B cell (primary cell): ENCODE measurements at regions of chr12 and their contacts with region 1.

Region 1: GRCh38 chr12:106223485-106224354 is 24.1 kb downstream of the CKAP4 start:
- DNase-seq: peak; percentile 79
- ATAC-seq: peak; percentile 73
- H3K4me3 ChIP-seq: no peak overlapping the region
- H3K4me3 Mint-ChIP-seq: no peak overlapping the region
- H3K27ac ChIP-seq: no peak overlapping the region
- H3K27ac Mint-ChIP-seq: no peak overlapping the region
- H3K4me1 ChIP-seq: peaks cover 12 to 16% of the 10 kb centered on the region in 2 donors
- H3K4me1 Mint-ChIP-seq: peaks cover 24% of the 10 kb centered on the region
- H3K27me3 ChIP-seq: peaks cover 0 to 17% (median 12%) of the 10 kb centered on the region in 4 experiments
- H3K27me3 Mint-ChIP-seq: peaks cover 16% of the 10 kb centered on the region
- CTCF ChIP-seq: peak; percentile 86

Region 2: DNA sequence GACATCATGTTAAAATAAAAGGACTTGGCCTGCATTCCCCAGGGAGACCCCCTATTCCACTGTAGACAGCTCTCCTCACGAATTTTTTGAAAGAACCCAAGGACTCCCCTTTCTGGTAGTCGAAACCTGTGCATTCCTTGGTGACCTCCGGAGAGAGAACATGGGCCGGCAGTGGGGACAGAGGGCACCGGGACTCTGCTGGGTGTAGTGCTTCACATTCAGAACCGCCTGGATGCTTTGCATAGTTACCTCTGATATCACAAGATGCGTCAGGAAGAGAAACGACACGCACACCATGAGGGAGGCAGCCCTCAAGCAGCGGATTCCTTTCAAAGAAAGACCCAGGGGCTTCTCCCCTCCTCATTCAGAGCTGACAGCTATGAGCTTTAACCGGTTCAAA is 14.4 kb after region 1 on chr12:
- CTCF ChIA-PET with region 1: interaction called, 11 read pairs
- POLR2A ChIA-PET with region 1: no interaction called
- intact Hi-C with region 1: no loop called
- DNase-seq: no peak
- ATAC-seq: no peak
- H3K4me3 ChIP-seq: no peak overlapping the region
- H3K4me3 Mint-ChIP-seq: no peak overlapping the region
- H3K27ac ChIP-seq: no peak overlapping the region
- H3K27ac Mint-ChIP-seq: no peak overlapping the region
- H3K4me1 ChIP-seq: no peaks in the 10 kb centered on the region
- H3K4me1 Mint-ChIP-seq: peaks cover 4% of the 10 kb centered on the region
- H3K27me3 ChIP-seq: peaks cover 0 to 15% (median 3%) of the 10 kb centered on the region in 4 experiments
- H3K27me3 Mint-ChIP-seq: no peaks in the 10 kb centered on the region
- CTCF ChIP-seq: no peak

Region 3: GRCh38 chr12:106282457-106283097 is 58.9 kb after region 1 on chr12:
- CTCF ChIA-PET with region 1: interaction called, 393 read pairs
- POLR2A ChIA-PET with region 1: interaction called, 7 read pairs
- intact Hi-C with region 1: loop called (anchors 1 kb)
- DNase-seq: peak; percentile 75
- ATAC-seq: peak; percentile 82
- H3K4me3 ChIP-seq: no peak overlapping the region
- H3K4me3 Mint-ChIP-seq: no peak overlapping the region
- H3K27ac ChIP-seq: no peak overlapping the region
- H3K27ac Mint-ChIP-seq: peak overlapping the region; percentile 2
- H3K4me1 ChIP-seq: peaks cover 7 to 8% of the 10 kb centered on the region in 2 donors
- H3K4me1 Mint-ChIP-seq: peaks cover 37% of the 10 kb centered on the region
- H3K27me3 ChIP-seq: peaks cover 0 to 11% (median 0%) of the 10 kb centered on the region in 4 experiments
- H3K27me3 Mint-ChIP-seq: peaks cover 20% of the 10 kb centered on the region
- CTCF ChIP-seq: peak; percentile 88

Region 4: DNA sequence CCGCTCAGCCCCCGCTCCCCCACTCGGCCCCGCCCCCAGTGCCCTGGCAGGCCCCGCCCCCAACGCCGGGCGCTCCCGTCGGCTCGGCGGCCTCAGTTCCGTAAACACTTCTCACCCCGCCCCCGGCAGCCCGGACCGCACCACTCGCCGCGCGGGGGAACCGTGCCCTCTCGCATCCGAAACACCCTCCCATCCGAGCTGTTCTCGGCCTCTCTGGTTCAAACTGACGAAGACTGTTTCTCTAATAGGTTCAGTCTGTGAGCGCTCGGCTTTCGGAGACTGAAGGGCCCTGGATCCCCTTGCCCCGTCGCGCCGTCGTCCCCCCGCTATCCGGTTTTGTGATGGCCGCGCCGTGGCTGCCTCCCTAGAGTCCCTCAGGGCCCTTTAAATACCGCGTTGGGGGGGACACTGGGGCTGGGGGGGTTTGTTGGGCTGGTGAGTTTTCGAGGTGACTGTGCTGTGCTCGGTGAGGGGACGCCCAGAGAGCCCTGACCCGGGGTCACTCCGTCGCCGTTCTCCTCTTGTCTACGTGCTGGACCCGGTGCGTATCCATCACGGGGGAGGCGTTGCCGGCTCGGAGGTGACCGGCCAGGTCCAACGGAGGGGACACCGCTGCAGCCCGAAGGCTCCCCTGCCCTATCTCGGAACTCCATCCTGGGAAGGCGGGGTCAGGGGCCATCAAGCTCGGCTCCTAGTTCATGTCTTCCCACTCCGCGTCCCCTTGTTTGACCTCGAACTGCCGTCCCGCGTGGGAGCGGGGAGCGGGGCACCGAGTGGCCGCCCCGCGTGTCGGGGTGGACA is 78.9 kb after region 1 on chr12 and contains the start of gene TCP11L2:
- CTCF ChIA-PET with region 1: interaction called, 85 read pairs
- POLR2A ChIA-PET with region 1: interaction called, 26 read pairs
- intact Hi-C with region 1: loop called (anchors 1 kb)
- DNase-seq: peak; percentile 96
- ATAC-seq: peak; percentile 58
- H3K4me3 ChIP-seq: peak within 1 kb of the TSS; percentile 84 to 100 (median 99)
- H3K4me3 Mint-ChIP-seq: peak within 1 kb of the TSS; percentile 94
- H3K27ac ChIP-seq: peak within 1 kb of the TSS; percentile 98 to 99
- H3K27ac Mint-ChIP-seq: peak within 1 kb of the TSS; percentile 100
- H3K4me1 ChIP-seq: peaks cover 43 to 48% of the 10 kb centered on the region in 2 donors
- H3K4me1 Mint-ChIP-seq: peaks cover 65% of the 10 kb centered on the region
- H3K27me3 ChIP-seq: no peaks in the 10 kb centered on the region
- H3K27me3 Mint-ChIP-seq: no peaks in the 10 kb centered on the region
- CTCF ChIP-seq: no peak
- total RNA-seq, gene TCP11L2: 306 and 315 TPM in 2 replicates

Region 5: DNA sequence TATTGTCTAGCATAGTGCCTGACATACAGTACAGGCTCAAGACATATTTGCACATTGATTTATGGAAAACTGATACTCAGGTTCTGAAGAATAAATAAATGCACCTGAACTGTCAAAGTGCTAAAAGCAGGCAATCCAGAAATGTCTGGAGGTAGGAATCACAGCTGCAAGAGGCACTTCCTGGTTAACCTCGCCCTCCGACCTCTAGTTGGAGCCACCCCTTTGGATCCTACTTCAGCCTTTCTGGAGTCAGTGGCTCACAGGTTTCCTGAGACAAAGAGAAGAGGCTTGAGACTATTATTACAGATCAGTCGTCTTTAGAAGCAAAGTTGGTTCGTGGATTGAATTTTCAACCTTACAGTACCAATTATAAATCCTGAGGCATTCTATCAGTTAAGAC is 91.8 kb after region 1 on chr12:
- CTCF ChIA-PET with region 1: interaction called, 23 read pairs
- POLR2A ChIA-PET with region 1: interaction called, 5 read pairs
- intact Hi-C with region 1: no loop called
- DNase-seq: no peak
- ATAC-seq: no peak
- H3K4me3 ChIP-seq: no peak overlapping the region
- H3K4me3 Mint-ChIP-seq: no peak overlapping the region
- H3K27ac ChIP-seq: no peak overlapping the region
- H3K27ac Mint-ChIP-seq: peak overlapping the region; percentile 59
- H3K4me1 ChIP-seq: peaks cover 7 to 9% of the 10 kb centered on the region in 2 donors
- H3K4me1 Mint-ChIP-seq: peaks cover 11% of the 10 kb centered on the region
- H3K27me3 ChIP-seq: no peaks in the 10 kb centered on the region
- H3K27me3 Mint-ChIP-seq: no peaks in the 10 kb centered on the region
- CTCF ChIP-seq: no peak

Region 6: DNA sequence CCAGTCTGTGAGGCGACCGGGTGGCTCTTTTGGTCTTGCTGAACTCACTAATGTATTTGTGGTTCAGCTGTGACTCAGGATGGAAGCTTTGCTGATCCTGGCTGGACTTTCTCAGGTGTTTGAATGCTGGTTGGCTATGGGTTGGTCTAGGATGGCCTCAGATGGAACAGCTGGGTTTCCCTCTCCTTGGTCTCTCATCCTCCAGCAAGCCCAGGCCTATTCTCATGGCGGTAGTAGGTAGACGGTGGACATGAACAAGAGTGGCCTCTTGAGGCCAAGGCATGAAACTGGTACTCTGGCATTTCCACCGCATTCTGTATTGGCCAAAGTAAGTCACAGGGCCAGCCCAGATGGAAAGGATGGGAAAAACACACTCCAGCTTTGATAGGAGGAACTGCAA is 122.0 kb after region 1 on chr12:
- CTCF ChIA-PET with region 1: interaction called, 26 read pairs
- POLR2A ChIA-PET with region 1: no interaction called
- intact Hi-C with region 1: no loop called
- DNase-seq: no peak
- ATAC-seq: no peak
- H3K4me3 ChIP-seq: no peak overlapping the region
- H3K4me3 Mint-ChIP-seq: no peak overlapping the region
- H3K27ac ChIP-seq: no peak overlapping the region
- H3K27ac Mint-ChIP-seq: no peak overlapping the region
- H3K4me1 ChIP-seq: no peaks in the 10 kb centered on the region
- H3K4me1 Mint-ChIP-seq: peaks cover 2% of the 10 kb centered on the region
- H3K27me3 ChIP-seq: no peaks in the 10 kb centered on the region
- H3K27me3 Mint-ChIP-seq: no peaks in the 10 kb centered on the region
- CTCF ChIP-seq: no peak

Region 7: GRCh38 chr12:106436164-106436563 is 212.4 kb after region 1 on chr12:
- CTCF ChIA-PET with region 1: no interaction called
- POLR2A ChIA-PET with region 1: no interaction called
- intact Hi-C with region 1: no loop called
- DNase-seq: no peak
- ATAC-seq: no peak
- H3K4me3 ChIP-seq: no peak overlapping the region
- H3K4me3 Mint-ChIP-seq: no peak overlapping the region
- H3K27ac ChIP-seq: no peak overlapping the region
- H3K27ac Mint-ChIP-seq: no peak overlapping the region
- H3K4me1 ChIP-seq: no peaks in the 10 kb centered on the region
- H3K4me1 Mint-ChIP-seq: no peaks in the 10 kb centered on the region
- H3K27me3 ChIP-seq: no peaks in the 10 kb centered on the region
- H3K27me3 Mint-ChIP-seq: no peaks in the 10 kb centered on the region
- CTCF ChIP-seq: no peak

Region 8: GRCh38 chr12:106919910-106920544 is 696.3 kb after region 1 on chr12:
- CTCF ChIA-PET with region 1: no interaction called
- POLR2A ChIA-PET with region 1: no interaction called
- intact Hi-C with region 1: loop called (anchors 10 kb)
- DNase-seq: peak; percentile 64
- ATAC-seq: no peak
- H3K4me3 ChIP-seq: no peak overlapping the region
- H3K4me3 Mint-ChIP-seq: no peak overlapping the region
- H3K27ac ChIP-seq: no peak overlapping the region
- H3K27ac Mint-ChIP-seq: no peak overlapping the region
- H3K4me1 ChIP-seq: peaks cover 0 to 18% of the 10 kb centered on the region in 2 donors
- H3K4me1 Mint-ChIP-seq: no peaks in the 10 kb centered on the region
- H3K27me3 ChIP-seq: peaks cover 11 to 82% (median 72%) of the 10 kb centered on the region in 4 experiments
- H3K27me3 Mint-ChIP-seq: peaks cover 84% of the 10 kb centered on the region
- CTCF ChIP-seq: peak; percentile 96